AG04449 (cell line): ENCODE measurements at regions of chr22 and their contacts with region 1.

Region 1: GRCh38 chr22:50341977-50342650 is 1.0 kb upstream of the PPP6R2 start:
- DNase-seq: no peak
- H3K4me3 ChIP-seq: peak overlapping the region; percentile 72
- CTCF ChIP-seq: peak; percentile 94

Region 2: GRCh38 chr22:50236731-50237409 is 105.2 kb before region 1 on chr22:
- CTCF ChIA-PET with region 1: interaction called, 66 read pairs
- POLR2A ChIA-PET with region 1: no interaction called
- DNase-seq: no peak
- H3K4me3 ChIP-seq: no peak overlapping the region
- CTCF ChIP-seq: peak; percentile 59

Region 3: GRCh38 chr22:50250555-50251476 is 91.3 kb before region 1 on chr22 and contains the start of gene HDAC10:
- CTCF ChIA-PET with region 1: interaction called, 92 read pairs
- POLR2A ChIA-PET with region 1: interaction called, 5 read pairs
- DNase-seq: no peak
- H3K4me3 ChIP-seq: peak within 1 kb of the TSS; percentile 85
- CTCF ChIP-seq: no peak

Region 4: DNA sequence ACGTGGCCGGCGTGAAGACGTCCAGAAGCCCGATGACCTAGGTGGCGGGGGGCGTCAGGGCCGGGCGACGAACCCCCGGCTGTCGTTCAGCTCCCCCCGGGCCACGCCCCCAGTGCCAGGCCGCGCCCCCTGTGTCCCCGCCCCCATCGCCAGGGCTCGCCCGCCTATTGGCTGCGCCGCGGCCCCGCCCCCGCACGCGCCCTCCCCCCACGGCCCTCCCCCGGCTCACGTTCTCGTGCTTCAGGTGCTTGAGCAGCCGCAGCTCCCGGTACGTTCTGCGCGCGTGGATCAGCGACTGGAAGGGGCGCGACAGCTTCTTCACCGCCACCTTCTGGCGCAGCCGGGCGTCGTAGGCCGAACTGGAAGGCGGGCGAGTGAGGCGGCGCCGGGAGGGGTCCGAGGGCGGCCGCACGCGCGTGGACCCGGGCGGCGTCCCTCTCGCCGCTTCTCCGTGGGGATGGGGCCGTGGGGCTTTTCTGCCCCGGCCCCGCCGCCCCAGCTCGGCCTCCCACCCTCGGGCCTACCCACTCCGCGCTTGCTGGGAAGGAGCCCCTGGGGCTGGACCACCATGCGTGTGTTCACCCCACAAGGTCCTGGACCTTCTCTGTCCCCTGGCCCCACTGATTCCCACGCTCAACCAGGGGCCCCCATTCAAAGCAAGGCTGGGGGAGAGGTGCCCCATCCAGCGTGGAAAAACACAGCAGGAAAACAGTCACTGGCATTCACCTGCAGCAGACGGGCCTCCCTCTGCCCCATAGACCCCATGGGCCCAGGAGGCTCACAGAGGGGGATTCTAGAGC is 74.3 kb before region 1 on chr22:
- CTCF ChIA-PET with region 1: interaction called, 31 read pairs
- POLR2A ChIA-PET with region 1: no interaction called
- DNase-seq: no peak
- H3K4me3 ChIP-seq: peak overlapping the region; percentile 54
- CTCF ChIP-seq: peak; percentile 50

Region 5: DNA sequence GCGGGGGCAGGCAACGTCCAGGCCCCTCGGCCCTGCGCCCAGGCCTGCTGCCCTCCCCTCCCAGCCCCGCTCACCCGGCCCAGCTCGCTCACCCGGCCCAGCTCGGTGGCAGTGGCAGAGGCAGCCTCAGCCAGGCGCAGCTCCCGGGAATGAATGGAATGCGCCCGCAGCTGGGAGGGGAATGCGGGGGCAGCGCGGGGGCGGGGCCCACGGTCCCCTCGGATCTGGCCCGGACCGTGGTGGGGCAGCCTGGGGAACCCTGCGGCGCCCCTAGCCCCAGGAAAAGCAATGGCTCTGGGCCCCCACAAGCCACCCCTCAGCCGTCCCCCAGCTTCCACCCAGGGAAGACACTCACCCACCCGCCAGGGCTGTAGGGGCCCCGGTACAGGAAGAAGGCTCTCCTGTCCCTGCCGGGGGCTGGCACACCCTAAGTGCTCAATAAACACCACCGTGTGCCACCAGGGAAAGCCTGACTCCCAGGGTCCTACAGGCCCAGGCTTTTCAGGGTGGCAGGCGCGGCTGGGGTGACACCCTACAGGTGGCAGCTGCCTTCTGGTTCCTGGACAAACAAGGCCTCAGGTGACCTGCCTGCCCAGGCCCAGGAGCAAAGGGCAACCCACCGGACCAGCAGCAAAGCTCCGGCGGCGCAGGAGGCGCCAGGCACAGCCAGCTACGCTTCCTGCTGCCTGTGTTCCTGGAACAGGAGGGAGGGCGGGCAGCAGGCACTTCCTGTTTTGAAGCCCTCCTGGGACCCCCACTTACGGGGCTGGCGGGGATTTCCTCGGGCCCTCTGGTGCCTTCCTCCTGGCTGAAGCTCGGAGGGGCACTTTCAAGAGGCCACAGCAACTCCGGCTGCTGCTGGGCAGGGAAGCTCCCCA is 48.4 kb before region 1 on chr22:
- CTCF ChIA-PET with region 1: interaction called, 10 read pairs
- POLR2A ChIA-PET with region 1: interaction called, 3 read pairs
- DNase-seq: no peak
- H3K4me3 ChIP-seq: peak overlapping the region; percentile 50
- CTCF ChIP-seq: no peak

Region 6: DNA sequence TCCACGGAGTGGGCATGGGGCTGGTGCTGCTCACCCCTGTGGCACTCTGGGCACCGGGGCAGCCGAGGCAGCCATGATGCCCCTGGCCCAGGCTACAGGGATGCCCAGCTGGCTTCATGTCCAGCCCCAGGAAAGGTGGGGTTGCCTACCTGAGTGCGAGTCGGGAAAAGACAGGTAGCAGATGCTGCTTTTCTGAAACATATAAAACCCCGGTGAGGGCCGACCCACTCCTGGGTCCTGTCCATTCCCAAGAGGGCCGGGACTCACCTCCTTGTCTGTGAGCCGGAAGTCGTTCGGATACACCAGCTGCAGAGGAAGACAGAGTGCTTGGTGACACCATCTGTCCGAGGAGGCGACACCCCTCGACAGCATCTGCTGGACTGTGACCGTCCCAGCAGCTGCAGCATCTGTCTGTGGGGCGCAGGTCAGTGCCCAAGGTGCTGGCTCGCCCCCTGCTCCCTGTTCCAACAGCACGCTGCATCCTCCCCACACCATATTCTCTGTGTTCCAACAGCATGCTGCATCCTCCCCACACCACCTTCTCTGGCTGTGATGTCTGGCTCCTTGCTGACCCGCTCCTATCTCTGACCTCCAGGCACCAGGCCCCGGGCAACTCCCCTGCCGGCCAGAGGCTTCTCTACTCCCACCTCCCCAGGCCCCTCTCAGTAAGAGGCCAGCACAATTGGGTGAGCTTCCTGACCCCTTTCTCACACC is 23.3 kb before region 1 on chr22:
- CTCF ChIA-PET with region 1: interaction called, 13 read pairs
- POLR2A ChIA-PET with region 1: no interaction called
- DNase-seq: no peak
- H3K4me3 ChIP-seq: no peak overlapping the region
- CTCF ChIP-seq: no peak

Region 7: GRCh38 chr22:50376085-50376651 is 34.1 kb after region 1 on chr22:
- CTCF ChIA-PET with region 1: interaction called, 10 read pairs
- POLR2A ChIA-PET with region 1: no interaction called
- DNase-seq: no peak
- H3K4me3 ChIP-seq: no peak overlapping the region
- CTCF ChIP-seq: no peak